Heart left ventricle (tissue), 16 donors: ENCODE measurements at regions of chr1 and their contacts with region 1.

Region 1: GRCh38 chr1:68213843-68214242 is 18.5 kb downstream of the WLS start:
- DNase-seq: peak; percentile 66 to 90 (median 76)
- ATAC-seq: peak; percentile 38 to 83 (median 66)
- H3K4me3 ChIP-seq: no peak overlapping the region
- H3K27ac ChIP-seq: peak overlapping the region in 5 of 12 donors; percentile 40 to 78 (median 44)
- H3K4me1 ChIP-seq: peaks cover 0 to 86% (median 43%) of the 10 kb centered on the region in 12 donors
- H3K27me3 ChIP-seq: no peaks in the 10 kb centered on the region
- CTCF ChIP-seq: no peak
- POLR2A ChIP-seq: no peak

Region 2: DNA sequence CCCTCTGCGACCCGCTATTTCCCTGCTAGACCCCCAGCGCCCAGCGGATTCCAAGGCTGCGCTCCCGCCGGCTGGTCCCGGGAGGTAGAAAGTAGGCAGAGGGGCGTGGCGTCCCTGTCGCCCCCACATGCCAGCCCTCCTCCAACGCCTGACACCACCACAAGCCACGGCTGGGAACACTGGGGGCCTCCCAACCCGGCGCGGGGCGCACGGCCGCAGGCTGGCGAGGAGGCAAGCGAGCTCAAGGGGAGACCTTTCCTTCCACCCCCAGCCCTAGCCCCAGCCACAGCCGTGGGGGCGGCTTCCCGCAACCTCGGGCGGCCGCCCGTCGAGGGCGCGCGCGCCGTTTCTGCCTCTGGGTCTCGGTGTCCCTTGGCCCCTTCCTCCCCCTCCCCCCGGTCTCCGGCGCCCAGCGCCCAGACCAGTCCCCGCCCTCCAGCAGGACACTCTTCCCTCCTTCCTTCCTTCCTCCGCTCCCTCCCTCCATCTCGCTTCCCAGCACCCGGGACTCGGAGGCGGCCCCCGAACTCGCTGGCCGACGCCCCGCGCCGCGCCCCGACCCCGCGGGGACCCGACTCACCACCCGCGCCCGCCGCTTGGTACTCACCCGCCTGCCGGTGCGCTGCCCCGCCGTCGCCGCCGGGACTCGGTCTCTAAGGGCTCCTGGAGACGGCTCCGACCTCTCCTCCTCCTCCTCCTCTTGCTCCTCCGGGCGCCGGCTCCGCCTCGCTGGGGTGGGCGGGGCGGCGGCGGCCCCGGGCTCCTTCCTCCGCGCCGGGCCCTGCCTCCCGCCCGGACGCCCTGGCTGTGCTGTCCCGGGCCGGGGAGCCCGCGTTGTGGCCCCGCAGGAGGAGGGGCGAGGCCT is 380.9 kb before region 1 on chr1 and contains the start of gene GNG12:
- intact Hi-C with region 1: loop called in 1 of 10 experiments (anchors 10 kb)
- DNase-seq: peak; percentile 71 to 85 (median 76)
- ATAC-seq: peak; percentile 53 to 93 (median 80)
- H3K4me3 ChIP-seq: peak within 1 kb of the TSS; percentile 66 to 93 (median 86)
- H3K27ac ChIP-seq: peak within 1 kb of the TSS; percentile 37 to 86 (median 82)
- H3K4me1 ChIP-seq: peaks cover 0 to 26% (median 5%) of the 10 kb centered on the region in 12 donors
- H3K27me3 ChIP-seq: peaks cover 0 to 44% (median 0%) of the 10 kb centered on the region in 9 donors
- CTCF ChIP-seq: no peak
- POLR2A ChIP-seq: peak in 1 of 2 donors; percentile 25
- total RNA-seq, gene GNG12: 27.2 to 80.2 (median 44.6) TPM

Region 3: GRCh38 chr1:68173911-68174737 is 39.7 kb before region 1 on chr1:
- intact Hi-C with region 1: loop called in 1 of 10 experiments (anchors 5 kb)
- DNase-seq: peak in 4 of 5 donors; percentile 46 to 67 (median 64)
- ATAC-seq: peak; percentile 20 to 81 (median 72)
- H3K4me3 ChIP-seq: peak overlapping the region in 5 of 12 donors; percentile 3 to 37 (median 16)
- H3K27ac ChIP-seq: peak overlapping the region; percentile 4 to 83 (median 68)
- H3K4me1 ChIP-seq: peaks cover 0 to 70% (median 49%) of the 10 kb centered on the region in 12 donors
- H3K27me3 ChIP-seq: no peaks in the 10 kb centered on the region
- CTCF ChIP-seq: no peak
- POLR2A ChIP-seq: no peak

Region 4: GRCh38 chr1:68232354-68233148 is 18.7 kb after region 1 on chr1 and contains the start of gene WLS:
- intact Hi-C with region 1: no loop called
- DNase-seq: peak; percentile 83 to 90 (median 87)
- ATAC-seq: peak; percentile 77 to 88 (median 87)
- H3K4me3 ChIP-seq: peak within 1 kb of the TSS; percentile 58 to 93 (median 78)
- H3K27ac ChIP-seq: peak within 1 kb of the TSS; percentile 47 to 93 (median 83)
- H3K4me1 ChIP-seq: peaks cover 0 to 39% (median 15%) of the 10 kb centered on the region in 12 donors
- H3K27me3 ChIP-seq: peaks cover 0 to 13% (median 0%) of the 10 kb centered on the region in 9 donors
- CTCF ChIP-seq: peak in 3 of 12 donors; percentile 9 to 35 (median 30)
- POLR2A ChIP-seq: peak; percentile 57 to 81
- total RNA-seq, gene WLS: 78.2 to 115 (median 107) TPM

Region 5: GRCh38 chr1:68339471-68339870 is 125.6 kb after region 1 on chr1:
- intact Hi-C with region 1: no loop called
- DNase-seq: no peak
- ATAC-seq: peak in 1 of 4 donors; percentile 49
- H3K4me3 ChIP-seq: no peak overlapping the region
- H3K27ac ChIP-seq: no peak overlapping the region
- H3K4me1 ChIP-seq: peaks cover 0 to 27% (median 0%) of the 10 kb centered on the region in 12 donors
- H3K27me3 ChIP-seq: no peaks in the 10 kb centered on the region
- CTCF ChIP-seq: no peak
- POLR2A ChIP-seq: no peak